ENCODE measurements at regions of chr17 and their contacts with region 1.

Region 1: DNA sequence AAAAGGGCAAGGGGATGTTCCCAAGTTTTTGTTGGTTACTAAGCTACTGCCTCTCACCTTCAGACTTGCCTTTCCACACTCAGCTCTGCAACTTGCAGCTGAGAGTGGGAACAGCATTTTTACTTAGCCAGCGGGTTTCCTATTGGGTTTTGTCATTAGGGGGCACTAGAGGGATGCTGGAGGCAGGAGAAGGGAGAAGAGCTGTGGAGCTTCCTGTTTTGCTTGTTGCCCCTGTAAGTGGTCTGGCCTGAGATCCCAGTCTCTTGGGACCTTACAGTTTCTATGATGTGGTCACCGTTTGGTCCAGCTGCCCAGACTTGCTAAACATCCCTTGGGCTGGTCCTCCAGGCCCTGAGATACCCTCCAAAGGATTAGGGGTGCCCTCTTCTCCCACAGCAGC is 209.6 kb upstream of the NLRP1 start:
- DNase-seq: peak; percentile 41
- ATAC-seq: peak; percentile 77
- H3K4me3 Mint-ChIP-seq: no peak overlapping the region
- H3K27ac Mint-ChIP-seq: no peak overlapping the region
- H3K4me1 Mint-ChIP-seq: peaks cover 40% of the 10 kb centered on the region
- H3K27me3 Mint-ChIP-seq: peaks cover 5% of the 10 kb centered on the region; the same call in 1 of the 2 replicates
- CTCF ChIP-seq: peak; percentile 30; the same call in 1 of the 2 replicates

Region 2: DNA sequence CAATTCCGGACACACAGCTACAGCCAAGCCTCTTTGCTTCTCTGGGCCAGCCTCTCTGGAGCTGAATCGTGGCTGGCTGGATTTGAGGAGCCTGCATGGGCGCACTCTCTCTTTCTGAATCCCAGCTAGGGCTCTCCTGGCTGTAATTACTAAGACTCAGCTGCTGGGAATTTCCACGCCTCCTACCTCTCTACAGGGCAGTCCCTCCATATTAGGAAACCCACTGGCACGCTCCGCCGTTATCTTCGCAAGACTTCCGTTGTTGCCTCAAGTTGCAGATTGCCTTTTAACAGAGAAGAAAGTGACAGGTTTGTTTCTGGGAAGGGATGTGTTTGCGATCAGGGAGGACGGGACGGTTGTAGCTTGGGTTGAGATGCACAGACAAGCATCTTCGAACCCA is 21.2 kb before region 1 on chr17:
- CTCF ChIA-PET with region 1: interaction called, 12 read pairs
- POLR2A ChIA-PET with region 1: no interaction called
- DNase-seq: no peak
- ATAC-seq: no peak
- H3K4me3 Mint-ChIP-seq: no peak overlapping the region
- H3K27ac Mint-ChIP-seq: no peak overlapping the region
- H3K4me1 Mint-ChIP-seq: no peaks in the 10 kb centered on the region
- H3K27me3 Mint-ChIP-seq: peaks cover 7% of the 10 kb centered on the region
- CTCF ChIP-seq: no peak

Region 3: GRCh38 chr17:5897275-5897911 is 103.5 kb after region 1 on chr17:
- CTCF ChIA-PET with region 1: interaction called, 10 read pairs
- POLR2A ChIA-PET with region 1: no interaction called
- DNase-seq: peak; percentile 42
- ATAC-seq: peak; percentile 88
- H3K4me3 Mint-ChIP-seq: peak overlapping the region; percentile 30; the same call in 1 of the 2 replicates
- H3K27ac Mint-ChIP-seq: peak overlapping the region; percentile 91
- H3K4me1 Mint-ChIP-seq: peaks cover 58% of the 10 kb centered on the region
- H3K27me3 Mint-ChIP-seq: no peaks in the 10 kb centered on the region
- CTCF ChIP-seq: no peak

Region 4: DNA sequence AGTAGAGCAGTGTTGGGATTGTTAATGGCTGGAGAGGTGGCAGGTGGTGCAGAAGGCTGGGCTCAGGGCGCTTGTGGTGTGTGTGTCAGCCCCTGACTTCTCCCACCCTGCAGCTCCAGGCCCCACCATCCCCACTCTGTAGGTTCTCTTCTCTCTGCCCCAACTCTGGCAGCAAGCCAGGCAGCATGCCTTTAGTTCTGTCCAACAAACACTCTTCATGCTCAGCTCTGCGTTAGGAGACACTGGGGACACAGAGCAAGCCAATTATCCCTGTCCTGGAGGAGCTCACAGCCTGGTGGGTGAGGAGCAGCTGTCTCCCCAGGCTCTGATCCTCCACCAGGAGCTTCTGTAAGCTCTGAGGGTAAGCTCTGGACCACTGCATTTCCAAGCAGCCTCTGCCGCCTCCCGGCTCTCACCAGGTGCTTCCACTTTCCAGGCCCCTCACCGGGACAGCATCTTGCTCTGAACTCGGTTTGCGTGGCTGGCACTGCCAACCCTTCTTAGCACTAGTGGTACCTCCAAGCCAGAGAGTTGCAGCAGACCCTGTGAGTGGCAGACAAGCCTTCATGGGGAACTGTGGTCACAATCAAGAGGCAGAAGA is 242.0 kb after region 1 on chr17:
- CTCF ChIA-PET with region 1: interaction called, 10 read pairs
- POLR2A ChIA-PET with region 1: no interaction called
- DNase-seq: no peak
- ATAC-seq: no peak
- H3K4me3 Mint-ChIP-seq: no peak overlapping the region
- H3K27ac Mint-ChIP-seq: no peak overlapping the region
- H3K4me1 Mint-ChIP-seq: 0 out of 2 replicates have a peak, but pooled peaks cover 2% of the 10 kb centered on the region
- H3K27me3 Mint-ChIP-seq: peaks cover 3% of the 10 kb centered on the region; the same call in 1 of the 2 replicates
- CTCF ChIP-seq: no peak

Measured in WTC11 (cell line).